ENCODE measurements at regions of chr5 and their contacts with region 1.

Region 1: GRCh38 chr5:132655821-132656773 is 1.9 kb upstream of the IL13 start:
- DNase-seq: peak in 1 of 2 donors; percentile 85
- ATAC-seq: peak; percentile 50
- H3K4me3 ChIP-seq: peak overlapping the region; percentile 6 to 57
- H3K27ac ChIP-seq: no peak overlapping the region
- H3K4me1 ChIP-seq: no peaks in the 10 kb centered on the region
- H3K27me3 ChIP-seq: no peaks in the 10 kb centered on the region

Region 2: GRCh38 chr5:132695956-132696355 is 39.9 kb after region 1 on chr5:
- intact Hi-C with region 1: no loop called
- DNase-seq: no peak
- ATAC-seq: no peak
- H3K4me3 ChIP-seq: no peak overlapping the region
- H3K27ac ChIP-seq: no peak overlapping the region
- H3K4me1 ChIP-seq: no peaks in the 10 kb centered on the region
- H3K27me3 ChIP-seq: no peaks in the 10 kb centered on the region

Region 3: DNA sequence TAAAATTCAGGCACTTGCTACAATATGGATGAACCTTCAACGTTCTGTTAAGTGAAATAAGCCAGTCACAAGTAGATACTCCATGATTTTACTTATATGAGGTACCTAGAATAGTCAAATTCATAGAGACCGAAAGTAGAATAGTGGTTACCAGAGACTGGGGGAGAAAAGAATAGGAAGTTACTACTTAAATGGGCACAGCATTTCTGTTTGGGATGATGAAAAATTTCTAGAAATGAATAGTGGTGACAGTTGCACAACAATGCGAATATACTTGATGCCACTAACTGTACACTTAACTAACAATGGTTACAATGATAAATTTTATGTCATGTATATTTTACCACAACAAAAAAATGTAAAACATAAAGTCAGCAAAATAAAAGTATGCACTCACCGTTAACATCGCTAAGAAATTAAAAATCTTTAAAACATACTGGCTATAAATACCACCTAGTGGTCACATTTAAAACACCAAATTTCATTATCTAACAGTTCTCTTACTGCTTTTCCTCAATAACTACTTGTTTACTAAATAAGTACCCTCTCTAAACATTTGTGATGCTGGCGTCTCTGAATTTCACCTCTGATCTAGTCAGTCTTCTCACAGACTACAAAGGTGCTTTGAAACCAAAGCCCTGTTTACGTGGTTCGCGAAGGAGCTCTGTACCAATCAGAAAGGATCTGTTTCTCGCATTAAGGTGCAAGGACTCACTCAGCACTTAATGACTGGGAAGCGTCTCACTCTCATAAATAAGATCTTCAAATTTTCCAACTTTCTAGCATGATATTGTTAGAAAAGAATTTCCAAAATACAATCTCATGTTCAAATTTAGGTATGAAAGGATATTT is 58.6 kb after region 1 on chr5:
- intact Hi-C with region 1: loop called in 1 of 2 experiments (anchors 10 kb)
- DNase-seq: no peak
- ATAC-seq: no peak
- H3K4me3 ChIP-seq: no peak overlapping the region
- H3K27ac ChIP-seq: no peak overlapping the region
- H3K4me1 ChIP-seq: no peaks in the 10 kb centered on the region
- H3K27me3 ChIP-seq: no peaks in the 10 kb centered on the region

Region 4: DNA sequence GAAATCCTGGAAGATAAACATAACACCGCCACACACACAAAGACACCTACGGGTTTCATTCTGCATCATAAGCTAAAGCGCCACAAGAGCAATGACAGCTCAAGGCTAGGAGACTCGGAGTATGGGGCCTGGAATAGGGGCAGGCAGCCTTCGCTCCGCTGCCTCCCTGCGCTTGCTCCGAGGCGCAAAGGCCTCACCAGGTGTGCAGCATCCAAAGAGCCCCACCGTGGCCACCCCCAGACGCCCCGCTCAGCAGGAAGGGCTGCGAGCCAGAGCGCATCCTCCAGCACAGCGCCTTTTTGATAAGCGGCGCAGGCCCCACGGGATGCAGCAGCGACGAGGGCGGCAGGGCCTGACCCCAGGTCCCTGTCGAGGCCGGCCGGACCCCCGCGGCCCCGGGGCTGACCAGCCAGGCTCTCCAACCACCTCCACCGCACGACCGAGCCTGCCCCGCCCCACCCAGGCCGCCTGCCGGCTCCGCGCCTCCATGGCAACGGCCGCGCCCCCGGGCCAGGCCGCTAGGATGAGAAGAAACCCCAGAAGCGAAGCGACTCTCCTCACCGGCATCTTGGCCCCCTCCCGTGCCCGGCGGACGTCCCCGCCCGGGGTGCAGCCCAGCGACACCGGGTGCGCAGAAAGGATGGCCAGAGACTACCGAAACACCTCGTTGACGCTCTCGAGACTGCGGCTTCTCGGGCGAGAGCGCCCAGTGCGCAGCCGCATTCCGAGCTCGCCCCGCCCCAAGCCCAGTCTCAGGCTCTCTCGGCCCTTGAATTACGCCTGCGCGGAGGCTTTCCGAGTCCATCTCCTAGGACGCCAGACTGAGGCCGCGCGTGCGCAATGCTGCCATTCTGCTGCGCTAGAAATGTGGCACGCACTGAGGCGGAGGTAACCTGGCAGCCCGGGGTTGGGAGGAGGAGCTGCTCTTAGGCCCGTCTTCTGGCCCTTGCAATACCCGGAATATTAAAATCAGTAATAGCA is 81.0 kb after region 1 on chr5 and contains the start of gene KIF3A:
- intact Hi-C with region 1: no loop called
- DNase-seq: peak; percentile 98 to 99
- ATAC-seq: peak; percentile 98
- H3K4me3 ChIP-seq: peak within 1 kb of the TSS; percentile 33 to 85
- H3K27ac ChIP-seq: no peak within 1 kb of the TSS
- H3K4me1 ChIP-seq: no peaks in the 10 kb centered on the region
- H3K27me3 ChIP-seq: no peaks in the 10 kb centered on the region
- total RNA-seq, gene KIF3A: 10.1 to 15.1 TPM

Region 5: GRCh38 chr5:134026521-134027268 is 1370.6 kb after region 1 on chr5:
- intact Hi-C with region 1: no loop called
- DNase-seq: peak in 1 of 2 donors; percentile 57
- ATAC-seq: no peak
- H3K4me3 ChIP-seq: no peak overlapping the region
- H3K27ac ChIP-seq: no peak overlapping the region
- H3K4me1 ChIP-seq: no peaks in the 10 kb centered on the region
- H3K27me3 ChIP-seq: no peaks in the 10 kb centered on the region

Measured in aorta (tissue), 5 donors.